ENCODE measurements at regions of chr3 and their contacts with region 1.

Region 1: DNA sequence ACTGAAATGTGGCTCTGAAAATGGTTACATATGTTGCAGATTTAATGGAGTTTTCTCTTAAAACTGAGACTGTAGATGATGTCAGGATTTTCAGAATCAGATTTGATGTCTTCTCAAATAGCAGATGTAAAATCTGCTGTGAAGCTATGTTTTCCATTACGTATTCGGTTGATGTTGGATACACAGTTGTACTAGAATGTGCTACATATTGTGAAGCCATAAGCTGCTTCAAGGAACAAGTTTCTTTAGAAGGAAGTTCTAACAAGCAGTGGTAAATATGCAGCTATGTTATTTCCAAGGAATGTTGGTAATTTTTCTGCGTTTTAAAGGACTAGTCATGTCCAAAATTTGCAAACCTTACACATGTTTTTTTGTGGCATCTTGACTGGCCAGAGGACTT is 197.7 kb downstream of the RBMS3 start:
- DNase-seq: no peak
- ATAC-seq: no peak
- H3K4me3 ChIP-seq: no peak overlapping the region
- H3K4me3 Mint-ChIP-seq: no peak overlapping the region
- H3K27ac ChIP-seq: no peak overlapping the region
- H3K27ac Mint-ChIP-seq: no peak overlapping the region
- H3K4me1 ChIP-seq: no peaks in the 10 kb centered on the region
- H3K4me1 Mint-ChIP-seq: no peaks in the 10 kb centered on the region
- H3K27me3 ChIP-seq: no peaks in the 10 kb centered on the region
- H3K27me3 Mint-ChIP-seq: no peaks in the 10 kb centered on the region
- CTCF ChIP-seq: no peak

Region 2: DNA sequence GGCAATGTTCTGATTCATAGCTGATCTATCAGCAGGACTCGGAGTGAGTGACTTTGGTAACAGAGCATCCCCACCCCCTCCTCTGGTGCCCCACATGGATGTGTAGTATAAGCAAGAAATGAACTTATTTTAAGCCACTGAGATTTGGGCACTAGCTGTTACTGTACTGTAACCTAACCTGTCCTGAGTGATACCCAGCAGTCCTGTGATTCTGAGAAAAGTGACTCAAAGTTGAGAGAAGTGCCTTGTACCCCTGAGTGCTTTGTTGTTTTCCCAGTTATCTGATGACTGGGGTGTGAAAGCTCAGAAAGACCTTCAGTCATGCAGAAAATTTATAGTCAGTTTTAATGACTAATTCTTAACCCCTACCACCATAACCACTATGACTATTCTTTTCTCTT is 637.6 kb before region 1 on chr3:
- CTCF ChIA-PET with region 1: no interaction called
- POLR2A ChIA-PET with region 1: no interaction called
- intact Hi-C with region 1: loop called in 1 of 2 experiments (anchors 10 kb)
- DNase-seq: no peak
- ATAC-seq: no peak
- H3K4me3 ChIP-seq: no peak overlapping the region
- H3K4me3 Mint-ChIP-seq: no peak overlapping the region
- H3K27ac ChIP-seq: no peak overlapping the region
- H3K27ac Mint-ChIP-seq: no peak overlapping the region
- H3K4me1 ChIP-seq: no peaks in the 10 kb centered on the region
- H3K4me1 Mint-ChIP-seq: no peaks in the 10 kb centered on the region
- H3K27me3 ChIP-seq: no peaks in the 10 kb centered on the region
- H3K27me3 Mint-ChIP-seq: no peaks in the 10 kb centered on the region
- CTCF ChIP-seq: no peak

Region 3: GRCh38 chr3:29440413-29441305 is 38.0 kb before region 1 on chr3:
- CTCF ChIA-PET with region 1: no interaction called
- POLR2A ChIA-PET with region 1: no interaction called
- intact Hi-C with region 1: no loop called
- DNase-seq: no peak
- ATAC-seq: no peak
- H3K4me3 ChIP-seq: no peak overlapping the region
- H3K4me3 Mint-ChIP-seq: peak overlapping the region; percentile 52
- H3K27ac ChIP-seq: no peak overlapping the region
- H3K27ac Mint-ChIP-seq: no peak overlapping the region
- H3K4me1 ChIP-seq: no peaks in the 10 kb centered on the region
- H3K4me1 Mint-ChIP-seq: peaks cover 5% of the 10 kb centered on the region
- H3K27me3 ChIP-seq: no peaks in the 10 kb centered on the region
- H3K27me3 Mint-ChIP-seq: no peaks in the 10 kb centered on the region
- CTCF ChIP-seq: no peak